T-cell (primary cell): ENCODE measurements at regions of chr12 and their contacts with region 1.

Region 1: GRCh38 chr12:89470741-89471509 is 53.7 kb downstream of the GALNT4 start:
- DNase-seq: peak in 1 of 35 experiments; percentile 71
- ATAC-seq: peak; percentile 62 to 68 (median 64)
- H3K4me3 ChIP-seq: no peak overlapping the region
- H3K4me3 Mint-ChIP-seq: peak overlapping the region in 1 of 3 donors; percentile 16
- H3K27ac ChIP-seq: no peak overlapping the region
- H3K27ac Mint-ChIP-seq: peak overlapping the region; percentile 45 to 67
- H3K4me1 ChIP-seq: peaks cover 17 to 19% of the 10 kb centered on the region in 2 experiments
- H3K4me1 Mint-ChIP-seq: peaks cover 40 to 67% (median 62%) of the 10 kb centered on the region in 3 donors
- H3K27me3 ChIP-seq: no peaks in the 10 kb centered on the region
- H3K27me3 Mint-ChIP-seq: no peaks in the 10 kb centered on the region

Region 2: GRCh38 chr12:89019408-89020120 is 451.4 kb before region 1 on chr12:
- CTCF ChIA-PET with region 1: interaction called, 7 to 11 read pairs
- POLR2A ChIA-PET with region 1: interaction called in 1 of 2 experiments, 3 read pairs
- DNase-seq: peak; percentile 37 to 84 (median 59)
- ATAC-seq: peak; percentile 94 to 99 (median 96)
- H3K4me3 ChIP-seq: peak overlapping the region in 1 of 2 donors; percentile 4
- H3K4me3 Mint-ChIP-seq: no peak overlapping the region
- H3K27ac ChIP-seq: no peak overlapping the region
- H3K27ac Mint-ChIP-seq: no peak overlapping the region
- H3K4me1 ChIP-seq: peaks cover 2 to 4% of the 10 kb centered on the region in 2 experiments
- H3K4me1 Mint-ChIP-seq: peaks cover 6 to 8% (median 7%) of the 10 kb centered on the region in 3 donors
- H3K27me3 ChIP-seq: peaks cover 0 to 4% of the 10 kb centered on the region in 2 experiments
- H3K27me3 Mint-ChIP-seq: peaks cover 3 to 10% of the 10 kb centered on the region in 2 donors

Region 3: GRCh38 chr12:89499857-89500256 is 28.9 kb after region 1 on chr12:
- CTCF ChIA-PET with region 1: no interaction called
- POLR2A ChIA-PET with region 1: no interaction called
- DNase-seq: no peak
- ATAC-seq: no peak
- H3K4me3 ChIP-seq: no peak overlapping the region
- H3K4me3 Mint-ChIP-seq: no peak overlapping the region
- H3K27ac ChIP-seq: no peak overlapping the region
- H3K27ac Mint-ChIP-seq: no peak overlapping the region
- H3K4me1 ChIP-seq: no peaks in the 10 kb centered on the region
- H3K4me1 Mint-ChIP-seq: peaks cover 6 to 10% (median 8%) of the 10 kb centered on the region in 3 donors
- H3K27me3 ChIP-seq: no peaks in the 10 kb centered on the region
- H3K27me3 Mint-ChIP-seq: no peaks in the 10 kb centered on the region

Region 4: DNA sequence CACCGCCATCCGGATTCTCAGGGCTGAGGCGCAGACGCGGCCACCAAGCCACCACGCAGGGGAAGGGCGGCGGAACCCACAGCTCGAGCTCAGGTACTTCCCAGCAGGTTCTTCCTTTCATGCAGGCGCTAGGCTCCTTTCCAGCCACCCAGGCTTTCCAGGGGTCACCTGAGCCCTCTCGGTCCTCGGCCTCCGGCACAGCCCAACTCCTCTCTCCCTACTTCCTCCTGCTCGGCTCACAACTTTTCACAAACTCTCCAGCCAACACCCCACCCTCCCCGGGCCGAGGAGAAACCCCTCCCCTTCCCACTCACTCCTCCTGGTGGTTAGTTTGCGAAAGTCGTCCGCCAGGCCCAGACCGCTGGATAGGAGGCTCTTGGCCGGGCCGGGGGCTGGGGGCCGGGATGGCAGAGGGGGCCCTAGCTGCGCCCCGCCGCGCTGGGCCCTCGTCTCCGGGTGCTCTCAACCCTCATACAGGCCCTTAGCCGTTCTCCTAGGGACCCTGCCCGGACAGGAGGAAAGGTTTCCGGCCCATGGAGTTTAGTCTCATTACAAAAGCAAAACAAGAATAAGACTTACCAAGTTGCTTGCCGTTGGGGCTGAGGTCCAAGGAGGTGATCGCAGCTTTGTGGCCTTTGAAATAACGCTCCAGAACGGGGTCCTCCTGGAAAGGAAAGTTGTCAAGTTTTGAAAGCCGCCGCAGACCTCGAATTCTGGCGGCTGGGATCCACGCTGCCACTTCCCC is 53.8 kb after region 1 on chr12 and contains the start of gene GALNT4:
- CTCF ChIA-PET with region 1: interaction called, 5 to 41 read pairs
- POLR2A ChIA-PET with region 1: interaction called, 3 read pairs
- DNase-seq: peak; percentile 30 to 83 (median 62)
- ATAC-seq: peak; percentile 70 to 78 (median 73)
- H3K4me3 ChIP-seq: peak within 1 kb of the TSS; percentile 85 to 89
- H3K4me3 Mint-ChIP-seq: peak within 1 kb of the TSS; percentile 90 to 95 (median 95)
- H3K27ac ChIP-seq: peak within 1 kb of the TSS; percentile 81
- H3K27ac Mint-ChIP-seq: peak within 1 kb of the TSS; percentile 89 to 90
- H3K4me1 ChIP-seq: peaks cover 8 to 23% of the 10 kb centered on the region in 2 experiments
- H3K4me1 Mint-ChIP-seq: peaks cover 41 to 62% (median 59%) of the 10 kb centered on the region in 3 donors
- H3K27me3 ChIP-seq: no peaks in the 10 kb centered on the region
- H3K27me3 Mint-ChIP-seq: no peaks in the 10 kb centered on the region
- total RNA-seq, gene GALNT4: 4.9 to 9.6 (median 6.5) TPM